AG04450 (cell line): ENCODE measurements at regions of chr5 and their contacts with region 1.

Region 1: DNA sequence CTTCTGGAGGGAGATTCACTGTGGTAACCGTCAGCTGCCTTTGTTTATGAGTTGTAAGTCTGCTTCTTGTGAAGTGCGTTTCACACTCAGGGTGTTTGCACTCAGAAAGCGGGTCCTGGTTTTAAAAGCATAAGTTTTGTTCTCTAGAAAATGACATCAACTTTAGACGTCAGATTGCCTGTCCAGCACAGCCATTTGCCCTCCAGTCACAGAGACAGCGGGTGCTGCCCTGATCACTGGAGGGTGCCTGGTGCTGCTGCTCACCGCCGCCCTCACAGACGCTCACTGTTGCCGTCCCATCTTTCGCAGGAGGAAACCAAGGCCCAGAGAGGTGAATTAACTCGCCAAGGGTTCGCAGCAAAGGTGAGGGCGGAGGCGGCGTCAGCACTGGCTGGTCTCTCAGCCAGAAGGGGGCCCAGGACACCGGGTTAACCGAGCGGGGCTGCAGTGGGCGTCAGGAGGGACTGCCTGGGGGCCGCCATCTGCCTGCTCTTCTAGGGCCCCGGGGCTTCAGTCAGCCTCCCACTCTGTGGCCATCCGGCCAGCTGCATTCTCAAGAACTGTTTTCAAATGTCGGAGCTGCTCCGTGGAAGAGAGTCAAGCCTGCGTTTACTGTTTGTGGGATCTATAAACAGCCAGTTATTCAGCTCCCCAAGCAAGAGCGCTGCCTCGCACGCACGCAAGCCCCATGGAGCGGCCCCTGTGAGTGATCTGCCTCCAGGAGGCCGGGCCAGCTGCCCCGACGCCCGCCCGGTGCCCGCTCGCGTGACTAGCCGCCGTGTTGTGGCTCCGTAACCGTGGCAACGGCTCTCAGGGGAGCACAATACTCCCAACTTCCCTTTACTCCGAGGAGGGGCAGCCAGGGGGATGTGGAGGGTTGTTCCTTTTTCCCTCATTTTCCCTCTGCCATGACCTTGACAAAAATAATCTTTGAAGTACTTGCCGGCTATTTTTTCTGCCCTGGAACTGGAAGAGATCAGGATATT is 43.4 kb upstream of the EXOC3 start:
- DNase-seq: peak; percentile 95
- H3K4me3 ChIP-seq: no peak overlapping the region
- H3K27ac ChIP-seq: peak overlapping the region; percentile 100
- H3K27me3 ChIP-seq: no peaks in the 10 kb centered on the region
- CTCF ChIP-seq: 0 out of 2 replicates have a peak, but pooled peaks have one; percentile 0

Region 2: DNA sequence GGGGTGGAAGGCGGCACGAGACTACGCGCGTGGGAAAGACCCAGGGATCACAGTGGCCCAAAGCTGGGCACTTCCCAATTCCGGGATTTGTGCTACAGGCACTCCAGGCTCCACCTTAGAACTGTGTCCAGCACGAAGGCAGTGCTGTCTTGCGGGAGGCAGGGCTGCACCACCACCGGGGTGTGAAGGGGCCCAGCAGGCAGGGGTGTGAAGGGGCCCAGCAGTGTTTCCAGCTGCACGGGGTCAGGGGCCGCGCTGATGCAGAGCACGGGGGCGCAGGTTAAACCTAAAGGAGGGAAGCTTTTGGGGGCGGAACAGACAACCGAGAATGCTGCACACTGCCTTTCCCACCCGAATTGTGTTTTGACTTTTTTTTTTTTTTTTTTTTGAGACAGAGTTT is 129.2 kb before region 1 on chr5:
- CTCF ChIA-PET with region 1: no interaction called
- POLR2A ChIA-PET with region 1: no interaction called
- DNase-seq: no peak
- H3K4me3 ChIP-seq: no peak overlapping the region
- H3K27ac ChIP-seq: no peak overlapping the region
- H3K27me3 ChIP-seq: no peaks in the 10 kb centered on the region
- CTCF ChIP-seq: no peak

Region 3: GRCh38 chr5:368183-369084 is 31.2 kb before region 1 on chr5:
- CTCF ChIA-PET with region 1: no interaction called
- POLR2A ChIA-PET with region 1: interaction called, 20 read pairs
- DNase-seq: peak; percentile 89
- H3K4me3 ChIP-seq: no peak overlapping the region
- H3K27ac ChIP-seq: peak overlapping the region; percentile 94
- H3K27me3 ChIP-seq: no peaks in the 10 kb centered on the region
- CTCF ChIP-seq: no peak

Region 4: GRCh38 chr5:386432-387341 is 12.9 kb before region 1 on chr5:
- CTCF ChIA-PET with region 1: no interaction called
- POLR2A ChIA-PET with region 1: interaction called, 10 read pairs
- DNase-seq: no peak
- H3K4me3 ChIP-seq: no peak overlapping the region
- H3K27ac ChIP-seq: peak overlapping the region; percentile 75
- H3K27me3 ChIP-seq: no peaks in the 10 kb centered on the region
- CTCF ChIP-seq: no peak